Endothelial cell of umbilical vein (primary cell): ENCODE measurements at regions of chr12 and their contacts with region 1.

Region 1: GRCh38 chr12:46675736-46676135 is 150.1 kb downstream of the SLC38A4 start:
- DNase-seq: peak; percentile 54
- H3K4me3 ChIP-seq: no peak overlapping the region
- H3K27ac ChIP-seq: no peak overlapping the region
- H3K4me1 ChIP-seq: no peaks in the 10 kb centered on the region
- H3K27me3 ChIP-seq: no peaks in the 10 kb centered on the region
- CTCF ChIP-seq: peak; percentile 36 to 44
- POLR2A ChIP-seq: no peak

Region 2: GRCh38 chr12:46357438-46358324 is 318.1 kb before region 1 on chr12:
- CTCF ChIA-PET with region 1: interaction called, 12 read pairs
- POLR2A ChIA-PET with region 1: no interaction called
- dilution Hi-C with region 1: no loop called
- intact Hi-C with region 1: no loop called
- DNase-seq: peak; percentile 81
- H3K4me3 ChIP-seq: no peak overlapping the region
- H3K27ac ChIP-seq: no peak overlapping the region
- H3K4me1 ChIP-seq: peaks cover 2% of the 10 kb centered on the region
- H3K27me3 ChIP-seq: no peaks in the 10 kb centered on the region
- CTCF ChIP-seq: no peak
- POLR2A ChIP-seq: peak; percentile 91

Region 3: GRCh38 chr12:46773586-46774321 is 98.0 kb after region 1 on chr12:
- CTCF ChIA-PET with region 1: no interaction called
- POLR2A ChIA-PET with region 1: no interaction called
- dilution Hi-C with region 1: no loop called
- intact Hi-C with region 1: no loop called
- DNase-seq: no peak
- H3K4me3 ChIP-seq: no peak overlapping the region
- H3K27ac ChIP-seq: no peak overlapping the region
- H3K4me1 ChIP-seq: no peaks in the 10 kb centered on the region
- H3K27me3 ChIP-seq: no peaks in the 10 kb centered on the region
- CTCF ChIP-seq: no peak
- POLR2A ChIP-seq: no peak

Region 4: DNA sequence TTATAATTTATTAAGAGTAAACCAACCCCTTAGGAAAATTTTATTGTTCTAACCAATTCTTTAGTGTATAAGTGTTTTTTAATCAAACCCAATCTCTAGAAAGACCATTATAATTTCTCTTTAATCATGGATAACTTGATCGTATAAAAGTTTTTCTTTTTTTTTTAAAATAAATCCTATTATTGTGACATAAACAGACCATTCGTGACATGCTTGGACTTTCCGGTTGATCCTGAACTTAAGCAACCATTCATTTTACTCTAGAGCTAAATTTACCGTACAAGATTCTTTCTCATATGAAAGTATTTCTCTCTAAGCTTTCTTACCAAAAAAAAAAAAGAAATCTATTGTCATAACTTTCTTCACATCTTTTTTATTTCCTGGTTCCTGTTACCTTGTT is 182.6 kb after region 1 on chr12:
- CTCF ChIA-PET with region 1: no interaction called
- POLR2A ChIA-PET with region 1: no interaction called
- dilution Hi-C with region 1: no loop called
- intact Hi-C with region 1: no loop called
- DNase-seq: no peak
- H3K4me3 ChIP-seq: no peak overlapping the region
- H3K27ac ChIP-seq: no peak overlapping the region
- H3K4me1 ChIP-seq: no peaks in the 10 kb centered on the region
- H3K27me3 ChIP-seq: no peaks in the 10 kb centered on the region
- CTCF ChIP-seq: no peak
- POLR2A ChIP-seq: no peak

Region 5: GRCh38 chr12:46933947-46934346 is 258.2 kb after region 1 on chr12:
- CTCF ChIA-PET with region 1: interaction called, 6 read pairs
- POLR2A ChIA-PET with region 1: no interaction called
- dilution Hi-C with region 1: no loop called
- intact Hi-C with region 1: loop called (anchors 2 kb)
- DNase-seq: peak; percentile 71
- H3K4me3 ChIP-seq: no peak overlapping the region
- H3K27ac ChIP-seq: no peak overlapping the region
- H3K4me1 ChIP-seq: no peaks in the 10 kb centered on the region
- H3K27me3 ChIP-seq: peaks cover 0 to 2% of the 10 kb centered on the region in 2 experiments
- CTCF ChIP-seq: peak in 1 of 2 donors; percentile 34
- POLR2A ChIP-seq: no peak

Region 6: DNA sequence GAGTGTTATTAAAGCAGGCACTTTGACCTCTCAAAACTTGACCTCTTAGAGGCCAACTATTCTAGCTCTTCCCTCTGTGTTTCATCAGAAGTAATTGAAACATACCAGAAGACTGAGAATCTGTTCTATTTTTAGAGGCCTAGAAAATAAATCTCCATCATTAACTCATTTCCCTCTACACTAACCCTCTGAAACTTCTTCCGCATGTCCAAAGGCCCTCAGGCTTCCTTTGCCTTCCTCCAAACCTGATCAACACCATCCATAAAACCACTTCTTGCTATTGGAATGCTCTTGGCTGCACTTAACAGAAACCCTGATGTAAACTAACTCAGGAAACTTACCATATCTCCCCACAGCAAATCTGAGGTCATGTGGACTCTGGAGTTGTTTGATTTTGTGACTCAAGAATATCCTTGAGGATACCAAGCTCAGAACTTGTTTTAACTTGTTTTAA is 833.7 kb after region 1 on chr12:
- CTCF ChIA-PET with region 1: no interaction called
- POLR2A ChIA-PET with region 1: no interaction called
- dilution Hi-C with region 1: no loop called
- intact Hi-C with region 1: no loop called
- DNase-seq: peak; percentile 28
- H3K4me3 ChIP-seq: no peak overlapping the region
- H3K27ac ChIP-seq: no peak overlapping the region
- H3K4me1 ChIP-seq: peaks cover 13% of the 10 kb centered on the region
- H3K27me3 ChIP-seq: no peaks in the 10 kb centered on the region
- CTCF ChIP-seq: no peak
- POLR2A ChIP-seq: no peak

Region 7: DNA sequence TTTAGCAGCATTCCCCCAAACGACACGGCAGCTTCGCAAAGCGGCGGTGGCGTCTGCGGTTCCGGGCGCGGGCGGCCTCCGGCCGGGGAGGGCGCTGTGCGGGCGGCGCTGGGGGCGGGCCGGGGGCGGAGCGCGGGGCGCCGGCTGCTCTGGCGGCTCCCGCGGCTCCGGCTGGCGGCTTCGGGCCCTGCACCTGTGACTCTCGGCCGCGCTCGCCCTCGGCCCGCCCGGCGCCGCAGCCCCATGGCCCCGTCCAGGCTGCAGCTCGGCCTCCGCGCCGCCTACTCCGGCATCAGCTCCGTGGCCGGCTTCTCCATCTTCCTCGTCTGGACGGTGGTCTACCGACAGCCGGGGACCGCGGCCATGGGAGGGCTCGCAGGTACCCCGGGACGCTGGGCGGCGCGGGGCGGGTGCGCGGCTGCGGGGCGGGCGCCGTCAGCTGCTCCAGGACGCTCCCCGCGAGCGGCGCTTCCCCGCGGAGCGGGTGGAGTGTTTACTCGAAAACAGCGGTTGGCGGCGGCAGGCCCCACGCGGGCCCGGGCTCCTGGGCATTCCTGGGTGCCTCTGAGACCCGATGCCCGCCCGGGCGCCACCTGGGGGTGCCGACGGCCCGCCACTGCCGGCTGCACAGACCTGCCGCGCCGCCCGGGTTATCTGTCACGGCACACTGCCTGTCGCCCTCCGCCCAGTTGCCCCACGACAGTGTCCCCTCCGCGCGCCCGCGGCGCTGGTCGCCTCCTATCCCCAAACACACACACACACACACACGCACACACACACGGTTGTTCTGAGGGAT is 1097.5 kb after region 1 on chr12 and contains the start of gene SLC48A1:
- CTCF ChIA-PET with region 1: no interaction called
- POLR2A ChIA-PET with region 1: no interaction called
- dilution Hi-C with region 1: no loop called
- intact Hi-C with region 1: no loop called
- DNase-seq: peak; percentile 54
- H3K4me3 ChIP-seq: peak within 1 kb of the TSS; percentile 43 to 70 (median 57)
- H3K27ac ChIP-seq: no peak within 1 kb of the TSS
- H3K4me1 ChIP-seq: peaks cover 34% of the 10 kb centered on the region
- H3K27me3 ChIP-seq: no peaks in the 10 kb centered on the region
- CTCF ChIP-seq: peak; percentile 13 to 38
- POLR2A ChIP-seq: peak; percentile 53
- total RNA-seq, gene SLC48A1: 17.9 and 20.3 TPM in 2 replicates